GM23248 (cell line): ENCODE measurements at regions of chr11 and their contacts with region 1.

Region 1: GRCh38 chr11:76209973-76210930 is 4.0 kb upstream of the WNT11 start:
- DNase-seq: peak; percentile 87
- H3K4me3 ChIP-seq: peak overlapping the region; percentile 75
- H3K27ac ChIP-seq: no peak overlapping the region
- H3K4me1 ChIP-seq: 0 out of 2 replicates have a peak, but pooled peaks cover 5% of the 10 kb centered on the region
- H3K27me3 ChIP-seq: peaks cover 22% of the 10 kb centered on the region

Region 2: DNA sequence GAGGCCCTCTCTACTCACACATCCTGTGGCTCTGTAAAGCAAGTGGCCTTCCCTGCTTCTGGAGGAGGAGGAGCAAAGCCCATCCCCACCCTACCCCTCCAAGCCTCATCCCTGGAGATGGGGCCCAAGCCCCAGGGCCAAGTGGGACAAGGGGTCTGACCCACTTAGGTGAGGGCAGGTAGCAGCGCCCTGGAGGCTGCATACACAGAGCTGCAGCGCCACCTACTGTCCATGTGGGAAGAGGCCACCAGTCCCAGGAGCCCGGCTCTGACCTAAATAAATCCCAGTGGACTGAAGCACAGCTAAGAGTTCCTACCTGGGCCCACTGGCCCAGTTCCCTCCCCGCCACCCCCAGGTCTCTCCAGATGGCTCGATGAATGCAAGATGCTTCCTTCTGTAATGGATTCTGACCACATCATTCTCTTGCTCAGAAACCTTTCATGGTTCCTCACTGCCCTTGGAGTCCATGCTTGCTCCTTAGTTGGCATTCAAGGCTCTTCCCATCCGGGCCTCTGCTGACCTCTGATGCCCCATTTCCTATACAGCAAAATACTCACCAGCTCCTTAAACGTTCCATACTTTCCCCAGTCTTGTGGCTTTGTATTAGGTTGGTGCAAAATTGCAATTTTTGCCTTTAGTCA is 108.6 kb after region 1 on chr11:
- in situ Hi-C with region 1: loop called (anchors 10 kb)
- DNase-seq: peak; percentile 82
- H3K4me3 ChIP-seq: no peak overlapping the region
- H3K27ac ChIP-seq: no peak overlapping the region
- H3K4me1 ChIP-seq: 0 out of 2 replicates have a peak, but pooled peaks cover 8% of the 10 kb centered on the region
- H3K27me3 ChIP-seq: peaks cover 9% of the 10 kb centered on the region; the same call in 1 of the 2 replicates

Region 3: DNA sequence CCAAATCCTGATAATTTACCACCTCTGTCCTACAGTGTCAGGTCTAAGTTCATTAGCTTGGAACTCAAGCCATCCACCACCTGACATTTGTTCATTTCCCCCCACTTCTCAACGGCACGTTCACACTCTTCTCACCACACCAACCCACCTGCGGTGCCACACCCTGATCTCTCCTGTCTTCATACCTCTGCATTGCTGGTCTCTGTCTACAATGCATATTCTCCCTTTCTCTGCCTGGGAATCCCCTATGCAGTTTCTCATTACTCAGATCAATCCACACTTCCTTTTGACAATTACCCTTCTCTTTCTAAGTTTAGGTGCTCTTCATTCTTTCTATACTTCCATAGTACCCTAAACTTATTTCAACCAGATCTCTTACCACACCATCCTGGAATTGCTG is 214.1 kb after region 1 on chr11:
- in situ Hi-C with region 1: no loop called
- DNase-seq: no peak
- H3K4me3 ChIP-seq: no peak overlapping the region
- H3K27ac ChIP-seq: no peak overlapping the region
- H3K4me1 ChIP-seq: no peaks in the 10 kb centered on the region
- H3K27me3 ChIP-seq: 0 out of 2 replicates have a peak, but pooled peaks cover 6% of the 10 kb centered on the region